ENCODE measurements at regions of chr15 and their contacts with region 1.

Region 1: DNA sequence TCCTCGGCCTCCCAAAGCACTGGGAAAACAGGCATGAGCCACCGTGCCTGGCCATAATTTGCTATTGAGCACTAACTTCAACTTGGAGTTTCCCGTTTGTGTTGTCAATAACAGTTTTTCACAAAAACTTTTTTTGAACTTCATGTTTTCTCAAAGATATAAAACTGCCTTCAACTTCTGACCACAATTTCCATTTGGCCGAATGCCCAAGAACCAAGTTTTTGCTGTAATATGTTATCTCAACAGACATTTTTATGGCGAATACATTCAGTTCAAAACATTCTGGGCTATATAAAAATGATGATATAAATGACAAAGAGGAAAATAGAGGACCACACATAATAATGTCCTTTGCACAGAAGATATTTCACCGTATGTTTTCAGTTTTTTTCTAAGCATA is 56.4 kb downstream of the NEDD4 start:
- DNase-seq: no peak
- ATAC-seq: no peak
- H3K4me3 ChIP-seq: no peak overlapping the region
- H3K27ac ChIP-seq: no peak overlapping the region
- H3K4me1 ChIP-seq: no peaks in the 10 kb centered on the region
- H3K27me3 ChIP-seq: no peaks in the 10 kb centered on the region
- CTCF ChIP-seq: no peak

Region 2: GRCh38 chr15:55969566-55969965 is 32.5 kb after region 1 on chr15:
- CTCF ChIA-PET with region 1: no interaction called
- POLR2A ChIA-PET with region 1: interaction called, 10 read pairs
- in situ Hi-C with region 1: no loop called
- intact Hi-C with region 1: no loop called
- DNase-seq: no peak
- ATAC-seq: 0 out of 2 replicates have a peak, but pooled peaks have one; percentile 48
- H3K4me3 ChIP-seq: no peak overlapping the region
- H3K27ac ChIP-seq: no peak overlapping the region
- H3K4me1 ChIP-seq: no peaks in the 10 kb centered on the region
- H3K27me3 ChIP-seq: no peaks in the 10 kb centered on the region
- CTCF ChIP-seq: no peak

Region 3: DNA sequence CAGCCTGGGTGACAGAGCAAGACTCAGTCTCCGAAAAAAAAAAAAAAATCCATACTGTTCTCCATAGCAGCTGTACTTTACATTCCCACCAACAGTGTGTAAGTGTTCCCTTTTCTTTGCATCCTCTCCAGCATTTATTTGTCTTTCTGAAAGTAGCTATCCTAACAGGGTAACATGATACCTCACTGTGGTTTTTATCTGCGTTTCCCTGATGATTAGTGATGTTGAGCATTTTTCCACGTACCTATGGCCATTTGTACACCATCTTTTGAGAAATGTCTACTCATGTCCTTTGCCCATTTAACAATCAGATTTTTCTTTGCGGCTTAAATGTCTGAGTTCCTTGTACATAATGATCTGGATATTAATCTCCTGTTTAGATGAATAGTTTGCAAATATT is 187.4 kb after region 1 on chr15:
- CTCF ChIA-PET with region 1: no interaction called
- POLR2A ChIA-PET with region 1: no interaction called
- in situ Hi-C with region 1: no loop called
- intact Hi-C with region 1: no loop called
- DNase-seq: no peak
- ATAC-seq: no peak
- H3K4me3 ChIP-seq: no peak overlapping the region
- H3K27ac ChIP-seq: no peak overlapping the region
- H3K4me1 ChIP-seq: no peaks in the 10 kb centered on the region
- H3K27me3 ChIP-seq: no peaks in the 10 kb centered on the region
- CTCF ChIP-seq: no peak